Sigmoid colon (tissue), 7 donors: ENCODE measurements at regions of chr4 and their contacts with region 1.

Region 1: GRCh38 chr4:41143311-41144039 is 70.9 kb downstream of the APBB2 start:
- DNase-seq: peak; percentile 88
- H3K4me3 ChIP-seq: peak overlapping the region in 2 of 4 donors; percentile 17 to 21
- H3K27ac ChIP-seq: peak overlapping the region; percentile 82 to 89 (median 87)
- H3K4me1 ChIP-seq: peaks cover 0 to 73% (median 68%) of the 10 kb centered on the region in 4 donors
- H3K27me3 ChIP-seq: no peaks in the 10 kb centered on the region
- CTCF ChIP-seq: no peak
- EP300 ChIP-seq: peak in 3 of 4 donors; percentile 1 to 52 (median 50)
- POLR2A ChIP-seq: no peak

Region 2: GRCh38 chr4:40976343-40976742 is 167.1 kb before region 1 on chr4:
- intact Hi-C with region 1: loop called (anchors 10 kb)
- DNase-seq: no peak
- H3K4me3 ChIP-seq: no peak overlapping the region
- H3K27ac ChIP-seq: no peak overlapping the region
- H3K4me1 ChIP-seq: peaks cover 0 to 13% (median 2%) of the 10 kb centered on the region in 4 donors
- H3K27me3 ChIP-seq: no peaks in the 10 kb centered on the region
- CTCF ChIP-seq: peak; percentile 25 to 73 (median 58)
- EP300 ChIP-seq: no peak
- POLR2A ChIP-seq: no peak

Region 3: GRCh38 chr4:41060352-41061334 is 82.8 kb before region 1 on chr4:
- intact Hi-C with region 1: loop called (anchors 5 kb)
- DNase-seq: peak; percentile 89
- H3K4me3 ChIP-seq: peak overlapping the region in 1 of 4 donors; percentile 3
- H3K27ac ChIP-seq: peak overlapping the region in 3 of 4 donors; percentile 70 to 81 (median 77)
- H3K4me1 ChIP-seq: peaks cover 0 to 77% (median 63%) of the 10 kb centered on the region in 4 donors
- H3K27me3 ChIP-seq: no peaks in the 10 kb centered on the region
- CTCF ChIP-seq: no peak
- EP300 ChIP-seq: peak; percentile 79 to 98 (median 92)
- POLR2A ChIP-seq: no peak

Region 4: DNA sequence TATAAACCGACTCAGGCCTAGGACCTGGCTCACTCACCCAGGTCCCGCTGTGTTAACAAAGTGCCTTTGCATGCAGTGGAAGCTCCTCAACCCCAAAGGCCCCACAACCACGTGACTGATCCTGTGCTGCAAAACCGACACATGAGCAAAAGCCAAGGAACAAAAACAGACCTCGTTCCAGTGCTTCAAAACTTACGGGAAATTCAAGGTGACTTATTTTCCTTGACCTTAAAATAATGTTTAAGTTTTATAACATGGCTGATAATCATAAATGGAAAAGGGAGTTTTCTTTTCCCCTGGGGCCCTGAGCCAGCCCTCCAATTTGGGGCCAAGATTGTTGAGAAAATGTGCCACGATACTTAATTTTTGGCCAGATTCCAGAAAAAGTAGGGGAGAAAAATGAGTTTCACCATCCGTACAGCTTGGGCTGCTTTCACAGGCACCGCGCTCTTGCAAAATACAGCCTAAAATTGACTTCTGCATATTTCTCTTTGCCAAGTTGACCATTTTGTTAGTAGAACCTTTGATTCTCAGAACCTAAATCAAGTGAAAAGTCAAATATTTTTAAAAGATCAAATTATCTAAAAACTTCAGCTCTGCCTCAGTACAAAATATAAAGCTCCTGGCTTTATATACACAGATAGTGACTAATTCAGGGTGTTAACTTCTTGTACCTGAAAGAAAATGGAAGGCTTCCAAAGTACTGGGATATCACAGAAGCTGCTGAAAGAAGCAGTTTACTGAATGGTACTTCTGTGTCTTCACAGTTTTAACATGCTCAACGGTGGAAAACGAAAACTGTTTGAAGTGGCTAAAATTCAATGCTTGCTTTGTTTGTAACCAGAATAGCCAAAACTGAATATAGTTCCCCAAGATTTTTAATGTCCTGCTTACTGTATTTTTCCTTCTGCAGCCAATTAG is 22.9 kb before region 1 on chr4:
- intact Hi-C with region 1: loop called (anchors 2 kb)
- DNase-seq: peak; percentile 92
- H3K4me3 ChIP-seq: peak overlapping the region in 2 of 4 donors; percentile 11 to 16
- H3K27ac ChIP-seq: peak overlapping the region; percentile 69 to 80 (median 74)
- H3K4me1 ChIP-seq: peaks cover 0 to 55% (median 43%) of the 10 kb centered on the region in 4 donors
- H3K27me3 ChIP-seq: no peaks in the 10 kb centered on the region
- CTCF ChIP-seq: no peak
- EP300 ChIP-seq: peak in 1 of 4 donors; percentile 17
- POLR2A ChIP-seq: no peak